Naive thymus-derived CD4-positive, alpha-beta T cell (primary cell): ENCODE measurements at regions of chr1 and their contacts with region 1.

Region 1: DNA sequence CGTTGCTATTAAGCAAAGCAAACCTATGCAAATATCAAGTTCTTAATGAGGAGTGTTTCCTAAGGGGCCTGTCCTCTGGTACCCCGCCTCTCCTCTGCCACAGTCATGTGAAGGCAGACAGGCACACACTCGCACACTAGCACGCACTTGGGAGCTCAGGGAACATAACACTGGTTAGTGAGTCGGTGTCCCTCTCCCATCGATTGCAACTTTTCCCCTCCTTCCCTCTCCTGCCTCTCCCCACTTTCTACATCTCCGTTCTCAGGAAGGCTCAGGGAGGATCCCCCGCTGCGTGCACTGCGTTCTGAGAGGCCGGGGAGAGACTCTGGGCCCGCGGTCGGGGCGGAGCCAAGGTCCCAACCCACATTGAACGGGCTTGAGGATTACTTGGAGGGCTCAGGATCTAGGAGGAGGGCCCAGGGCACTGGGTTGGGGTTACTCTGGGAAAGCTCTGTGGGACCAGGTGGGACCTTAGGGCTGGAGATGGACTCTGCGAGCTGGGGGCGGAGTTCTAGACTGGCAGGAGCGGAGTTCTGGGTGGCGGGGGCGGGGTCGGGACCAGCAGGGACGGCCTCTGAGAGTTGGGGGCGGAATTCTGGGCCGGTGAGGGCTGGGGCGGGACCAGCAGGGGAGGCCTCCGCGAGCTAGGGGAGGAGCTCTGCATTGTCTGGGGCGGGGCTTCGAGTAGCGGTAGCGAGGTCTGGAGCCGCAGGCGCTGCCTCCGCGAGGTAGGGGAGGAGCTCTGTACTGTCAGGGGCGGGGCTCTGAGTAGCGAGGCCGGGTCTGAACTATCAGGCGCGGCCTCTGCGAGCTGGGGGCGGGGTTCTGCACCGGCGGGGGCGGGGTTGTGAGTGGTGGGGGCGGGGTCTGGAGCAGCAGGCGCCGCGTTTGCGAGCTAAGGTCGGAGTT is 533 bp upstream of the LEPR start:
- DNase-seq: peak; percentile 93 to 99 (median 98)
- ATAC-seq: peak; percentile 97
- H3K4me3 ChIP-seq: peak overlapping the region; percentile 86
- H3K4me3 Mint-ChIP-seq: no peak overlapping the region
- H3K27ac ChIP-seq: peak overlapping the region; percentile 78
- H3K27ac Mint-ChIP-seq: peak overlapping the region in 7 of 9 donors; percentile 84 to 97 (median 95)
- H3K4me1 ChIP-seq: peaks cover 0 to 8% of the 10 kb centered on the region in 2 donors
- H3K4me1 Mint-ChIP-seq: peaks cover 0 to 31% (median 22%) of the 10 kb centered on the region in 7 donors
- H3K27me3 ChIP-seq: no peaks in the 10 kb centered on the region
- H3K27me3 Mint-ChIP-seq: peaks cover 0 to 12% (median 0%) of the 10 kb centered on the region in 5 donors

Region 2: GRCh38 chr1:63799820-63800219 is 1620.1 kb before region 1 on chr1:
- CTCF ChIA-PET with region 1: no interaction called
- POLR2A ChIA-PET with region 1: no interaction called
- intact Hi-C with region 1: no loop called
- DNase-seq: no peak
- ATAC-seq: no peak
- H3K4me3 ChIP-seq: no peak overlapping the region
- H3K4me3 Mint-ChIP-seq: no peak overlapping the region
- H3K27ac ChIP-seq: no peak overlapping the region
- H3K27ac Mint-ChIP-seq: no peak overlapping the region
- H3K4me1 ChIP-seq: no peaks in the 10 kb centered on the region
- H3K4me1 Mint-ChIP-seq: no peaks in the 10 kb centered on the region
- H3K27me3 ChIP-seq: no peaks in the 10 kb centered on the region
- H3K27me3 Mint-ChIP-seq: peaks cover 0 to 18% (median 4%) of the 10 kb centered on the region in 5 donors

Region 3: GRCh38 chr1:64744492-64745180 is 675.3 kb before region 1 on chr1 and contains the start of gene RAVER2:
- CTCF ChIA-PET with region 1: no interaction called
- POLR2A ChIA-PET with region 1: no interaction called
- intact Hi-C with region 1: loop called (anchors 5 to 10 kb)
- DNase-seq: peak; percentile 41 to 60 (median 48)
- ATAC-seq: peak; percentile 84
- H3K4me3 ChIP-seq: peak within 1 kb of the TSS; percentile 55
- H3K4me3 Mint-ChIP-seq: peak within 1 kb of the TSS; percentile 80 to 98 (median 90)
- H3K27ac ChIP-seq: peak within 1 kb of the TSS; percentile 10
- H3K27ac Mint-ChIP-seq: peak within 1 kb of the TSS in 8 of 9 donors; percentile 28 to 93 (median 82)
- H3K4me1 ChIP-seq: peaks cover 5% of the 10 kb centered on the region in 2 donors
- H3K4me1 Mint-ChIP-seq: peaks cover 11 to 26% (median 16%) of the 10 kb centered on the region in 7 donors
- H3K27me3 ChIP-seq: no peaks in the 10 kb centered on the region
- H3K27me3 Mint-ChIP-seq: peaks cover 0 to 51% (median 6%) of the 10 kb centered on the region in 5 donors
- total RNA-seq, gene RAVER2: 0.29 to 1.9 (median 1.2) TPM

Region 4: GRCh38 chr1:65002508-65003315 is 417.2 kb before region 1 on chr1:
- CTCF ChIA-PET with region 1: no interaction called
- POLR2A ChIA-PET with region 1: no interaction called
- intact Hi-C with region 1: loop called in 1 of 2 experiments (anchors 1 kb)
- DNase-seq: peak; percentile 58 to 81 (median 67)
- ATAC-seq: peak; percentile 90
- H3K4me3 ChIP-seq: peak overlapping the region; percentile 56
- H3K4me3 Mint-ChIP-seq: peak overlapping the region; percentile 77 to 93 (median 86)
- H3K27ac ChIP-seq: peak overlapping the region; percentile 66
- H3K27ac Mint-ChIP-seq: peak overlapping the region; percentile 24 to 95 (median 82)
- H3K4me1 ChIP-seq: peaks cover 16 to 19% of the 10 kb centered on the region in 2 donors
- H3K4me1 Mint-ChIP-seq: peaks cover 8 to 44% (median 28%) of the 10 kb centered on the region in 7 donors
- H3K27me3 ChIP-seq: no peaks in the 10 kb centered on the region
- H3K27me3 Mint-ChIP-seq: peaks cover 0 to 33% (median 0%) of the 10 kb centered on the region in 5 donors

Region 5: DNA sequence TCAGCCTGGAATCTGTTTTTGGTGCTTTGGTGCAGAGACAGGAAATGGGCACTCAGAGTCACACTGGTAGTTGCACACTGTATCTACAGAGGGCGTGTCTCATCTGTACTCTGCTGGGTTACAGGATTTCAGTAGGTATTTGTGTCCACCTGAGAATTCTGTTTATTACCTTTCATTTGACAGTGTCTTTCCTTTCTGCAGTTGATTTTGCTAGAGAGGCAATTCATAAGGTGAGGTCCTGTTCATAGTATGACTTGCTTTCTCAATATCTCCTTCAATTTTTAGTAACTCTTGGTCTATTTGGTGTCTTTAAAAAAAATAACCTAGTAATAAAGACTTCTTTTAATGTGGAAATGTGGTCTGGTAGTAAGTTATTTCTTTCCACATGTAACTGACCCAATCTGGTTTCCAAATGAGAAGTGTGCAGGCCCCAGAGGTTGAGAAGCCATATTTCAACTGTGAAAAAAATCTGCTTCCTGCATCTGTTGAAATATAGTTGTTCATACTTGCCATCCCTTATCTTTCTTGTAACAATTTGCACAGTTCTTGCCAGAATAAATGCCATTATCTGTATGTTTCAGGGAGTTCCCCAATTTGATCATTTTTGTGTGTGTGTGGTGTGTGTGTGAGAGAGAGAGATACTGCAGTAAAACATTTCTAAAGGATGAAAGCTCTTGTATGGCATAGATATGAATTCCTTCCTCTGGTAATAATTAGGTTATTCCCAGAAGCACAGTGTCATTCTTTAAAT is 189.0 kb before region 1 on chr1:
- CTCF ChIA-PET with region 1: no interaction called
- POLR2A ChIA-PET with region 1: no interaction called
- intact Hi-C with region 1: loop called in 1 of 2 experiments (anchors 2 kb)
- DNase-seq: peak in 1 of 9 donors; percentile 8
- ATAC-seq: no peak
- H3K4me3 ChIP-seq: no peak overlapping the region
- H3K4me3 Mint-ChIP-seq: peak overlapping the region in 1 of 10 donors; percentile 27
- H3K27ac ChIP-seq: no peak overlapping the region
- H3K27ac Mint-ChIP-seq: peak overlapping the region in 1 of 9 donors; percentile 62
- H3K4me1 ChIP-seq: no peaks in the 10 kb centered on the region
- H3K4me1 Mint-ChIP-seq: peaks cover 2 to 33% (median 9%) of the 10 kb centered on the region in 7 donors
- H3K27me3 ChIP-seq: no peaks in the 10 kb centered on the region
- H3K27me3 Mint-ChIP-seq: peaks cover under 1 to 14% (median 8%) of the 10 kb centered on the region in 5 donors

Region 6: GRCh38 chr1:65309304-65310077 is 110.4 kb before region 1 on chr1 and contains the start of gene DNAJC6:
- CTCF ChIA-PET with region 1: no interaction called
- POLR2A ChIA-PET with region 1: no interaction called
- intact Hi-C with region 1: loop called in 1 of 2 experiments (anchors 2 kb)
- DNase-seq: peak in 8 of 9 donors; percentile 8 to 77 (median 32)
- ATAC-seq: peak; percentile 83
- H3K4me3 ChIP-seq: no peak within 1 kb of the TSS
- H3K4me3 Mint-ChIP-seq: peak within 1 kb of the TSS; percentile 26 to 78 (median 66)
- H3K27ac ChIP-seq: no peak within 1 kb of the TSS
- H3K27ac Mint-ChIP-seq: peak within 1 kb of the TSS in 1 of 9 donors; percentile 38
- H3K4me1 ChIP-seq: peaks cover 0 to 3% of the 10 kb centered on the region in 2 donors
- H3K4me1 Mint-ChIP-seq: peaks cover 0 to 16% (median 11%) of the 10 kb centered on the region in 7 donors
- H3K27me3 ChIP-seq: peaks cover 0 to 5% of the 10 kb centered on the region in 2 donors
- H3K27me3 Mint-ChIP-seq: peaks cover 39 to 72% (median 56%) of the 10 kb centered on the region in 5 donors
- total RNA-seq, gene DNAJC6: 1.4 to 7.0 (median 4.3) TPM

Region 7: DNA sequence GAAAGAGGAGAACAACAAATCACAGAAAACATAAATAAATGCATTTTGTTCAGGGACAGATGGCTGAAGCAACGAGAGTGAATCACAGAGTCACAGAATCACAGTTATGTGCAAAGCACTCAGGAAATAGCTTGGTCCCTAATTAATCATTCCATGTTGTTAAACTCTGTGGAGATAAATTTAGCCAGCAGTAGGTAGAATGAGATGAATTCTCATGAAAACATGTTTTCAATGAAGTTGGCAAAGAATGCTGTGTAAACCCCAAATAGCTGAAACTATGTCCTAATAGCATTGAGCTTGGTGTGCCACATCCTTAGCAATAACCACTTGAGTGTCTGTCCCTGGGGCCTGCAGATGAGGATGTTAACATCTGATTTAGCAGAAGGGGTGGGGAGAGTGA is 21.0 kb after region 1 on chr1:
- CTCF ChIA-PET with region 1: no interaction called
- POLR2A ChIA-PET with region 1: no interaction called
- intact Hi-C with region 1: no loop called
- DNase-seq: no peak
- ATAC-seq: no peak
- H3K4me3 ChIP-seq: no peak overlapping the region
- H3K4me3 Mint-ChIP-seq: no peak overlapping the region
- H3K27ac ChIP-seq: no peak overlapping the region
- H3K27ac Mint-ChIP-seq: no peak overlapping the region
- H3K4me1 ChIP-seq: no peaks in the 10 kb centered on the region
- H3K4me1 Mint-ChIP-seq: peaks cover 0 to 6% (median 0%) of the 10 kb centered on the region in 7 donors
- H3K27me3 ChIP-seq: no peaks in the 10 kb centered on the region
- H3K27me3 Mint-ChIP-seq: peaks cover 0 to 5% (median 0%) of the 10 kb centered on the region in 5 donors

Region 8: GRCh38 chr1:65459397-65459768 is 39.4 kb after region 1 on chr1:
- CTCF ChIA-PET with region 1: interaction called, 3 read pairs
- POLR2A ChIA-PET with region 1: no interaction called
- intact Hi-C with region 1: loop called in 1 of 2 experiments (anchors 1 kb)
- DNase-seq: peak in 4 of 9 donors; percentile 4 to 19 (median 6)
- ATAC-seq: no peak
- H3K4me3 ChIP-seq: no peak overlapping the region
- H3K4me3 Mint-ChIP-seq: no peak overlapping the region
- H3K27ac ChIP-seq: no peak overlapping the region
- H3K27ac Mint-ChIP-seq: no peak overlapping the region
- H3K4me1 ChIP-seq: peaks cover 0 to 15% of the 10 kb centered on the region in 2 donors
- H3K4me1 Mint-ChIP-seq: peaks cover 7 to 33% (median 25%) of the 10 kb centered on the region in 7 donors
- H3K27me3 ChIP-seq: no peaks in the 10 kb centered on the region
- H3K27me3 Mint-ChIP-seq: peaks cover 0 to 10% (median 5%) of the 10 kb centered on the region in 5 donors

Region 9: GRCh38 chr1:65558215-65558614 is 138.3 kb after region 1 on chr1:
- CTCF ChIA-PET with region 1: no interaction called
- POLR2A ChIA-PET with region 1: no interaction called
- intact Hi-C with region 1: no loop called
- DNase-seq: no peak
- ATAC-seq: no peak
- H3K4me3 ChIP-seq: no peak overlapping the region
- H3K4me3 Mint-ChIP-seq: no peak overlapping the region
- H3K27ac ChIP-seq: no peak overlapping the region
- H3K27ac Mint-ChIP-seq: no peak overlapping the region
- H3K4me1 ChIP-seq: no peaks in the 10 kb centered on the region
- H3K4me1 Mint-ChIP-seq: no peaks in the 10 kb centered on the region
- H3K27me3 ChIP-seq: no peaks in the 10 kb centered on the region
- H3K27me3 Mint-ChIP-seq: no peaks in the 10 kb centered on the region

Region 10: DNA sequence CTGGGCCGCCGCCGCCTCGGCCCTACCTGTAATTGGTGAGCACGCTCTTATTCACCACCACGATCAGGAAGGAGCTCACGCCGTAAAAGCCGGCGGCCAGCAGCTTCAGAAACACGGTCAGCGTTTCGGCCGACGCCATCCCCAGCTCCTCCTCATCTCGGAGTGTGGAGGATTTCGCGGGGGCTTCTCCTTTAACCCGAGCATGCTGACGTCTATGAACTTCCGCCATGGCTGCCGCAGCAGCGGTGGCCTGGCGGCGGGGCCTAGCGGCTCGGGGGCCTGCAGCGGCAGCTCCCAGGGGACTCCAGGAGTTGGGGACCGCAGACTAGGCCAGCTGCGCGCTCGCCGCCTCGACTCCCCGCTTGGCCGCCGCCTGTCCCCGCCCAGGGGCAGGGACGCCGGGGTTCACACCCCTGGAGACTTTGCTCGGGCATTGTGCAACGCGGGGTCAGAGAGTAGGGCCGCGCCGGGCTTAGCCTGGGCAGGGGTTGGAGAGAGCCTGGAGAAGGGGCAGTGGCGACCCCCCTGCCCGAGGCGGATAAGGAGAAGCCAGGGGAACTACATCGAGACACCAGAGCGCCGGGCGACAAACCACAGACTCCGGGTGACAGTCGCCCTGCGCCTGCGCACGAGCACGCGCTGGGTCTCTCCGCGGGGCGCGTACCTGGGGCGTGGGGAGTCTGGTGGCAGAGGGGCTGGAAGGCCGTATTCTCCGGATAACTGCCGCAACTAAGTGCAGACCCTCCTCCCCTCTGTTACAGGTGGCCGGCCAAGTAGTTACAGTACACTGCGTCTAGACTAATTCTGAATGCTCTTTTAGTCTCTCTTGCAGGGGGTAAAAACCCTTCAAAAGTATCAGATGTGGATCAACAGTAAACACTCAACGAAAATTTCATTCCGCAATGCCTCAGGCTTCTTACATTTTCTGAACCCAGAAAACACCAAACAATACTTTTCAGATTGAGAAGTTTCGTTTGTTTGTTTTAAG is 1634.1 kb after region 1 on chr1 and contains the start of gene SLC35D1:
- CTCF ChIA-PET with region 1: no interaction called
- POLR2A ChIA-PET with region 1: no interaction called
- intact Hi-C with region 1: loop called in 1 of 2 experiments (anchors 10 kb)
- DNase-seq: peak; percentile 65 to 88 (median 76)
- ATAC-seq: peak; percentile 86
- H3K4me3 ChIP-seq: peak within 1 kb of the TSS; percentile 87
- H3K4me3 Mint-ChIP-seq: peak within 1 kb of the TSS; percentile 90 to 97 (median 95)
- H3K27ac ChIP-seq: peak within 1 kb of the TSS; percentile 96
- H3K27ac Mint-ChIP-seq: peak within 1 kb of the TSS; percentile 80 to 99 (median 94)
- H3K4me1 ChIP-seq: peaks cover 6 to 13% of the 10 kb centered on the region in 2 donors
- H3K4me1 Mint-ChIP-seq: peaks cover 17 to 37% (median 30%) of the 10 kb centered on the region in 7 donors
- H3K27me3 ChIP-seq: no peaks in the 10 kb centered on the region
- H3K27me3 Mint-ChIP-seq: peaks cover 0 to 9% (median 0%) of the 10 kb centered on the region in 5 donors
- total RNA-seq, gene SLC35D1: 9.8 to 25.7 (median 15.4) TPM